ENCODE measurements at regions of chr12 and their contacts with region 1.

Region 1: DNA sequence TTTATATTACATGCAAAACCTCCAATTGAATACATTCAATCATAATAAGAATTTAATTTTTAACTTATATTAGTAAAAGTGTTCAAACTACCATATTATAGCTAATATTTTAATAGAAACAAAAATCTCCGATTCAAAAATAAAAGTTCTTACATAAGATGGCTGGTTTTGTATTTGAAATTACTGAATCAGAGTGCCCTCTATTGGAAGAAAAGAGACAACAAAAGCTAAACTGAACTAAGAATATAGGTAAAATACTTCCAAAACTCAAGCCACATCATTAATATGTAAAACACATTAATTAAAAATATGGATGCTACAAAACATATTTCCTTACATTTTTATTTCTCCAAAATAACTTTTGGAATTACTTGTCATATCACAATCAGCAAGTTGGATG is 120.3 kb downstream of the GARIN6 start:
- DNase-seq: no peak
- ATAC-seq: no peak
- H3K4me3 ChIP-seq: no peak overlapping the region
- H3K27ac ChIP-seq: no peak overlapping the region
- H3K4me1 ChIP-seq: no peaks in the 10 kb centered on the region
- H3K27me3 ChIP-seq: no peaks in the 10 kb centered on the region
- CTCF ChIP-seq: peak in 6 of 7 experiments; percentile 44 to 62 (median 56)
- POLR2A ChIP-seq: no peak

Region 2: GRCh38 chr12:99043319-99043914 is 724.4 kb before region 1 on chr12:
- intact Hi-C with region 1: loop called (anchors 10 kb)
- DNase-seq: peak; percentile 70 to 83 (median 74)
- ATAC-seq: peak; percentile 64
- H3K4me3 ChIP-seq: no peak overlapping the region
- H3K27ac ChIP-seq: no peak overlapping the region
- H3K4me1 ChIP-seq: no peaks in the 10 kb centered on the region
- H3K27me3 ChIP-seq: no peaks in the 10 kb centered on the region
- CTCF ChIP-seq: peak; percentile 65 to 87 (median 83)
- POLR2A ChIP-seq: no peak